PC-9 (cell line): ENCODE measurements at regions of chr9 and their contacts with region 1.

Region 1: GRCh38 chr9:109349421-109349846 is 28.6 kb upstream of the EPB41L4B start:
- DNase-seq: peak; percentile 26 to 94
- H3K4me3 ChIP-seq: no peak overlapping the region
- H3K27ac ChIP-seq: peak overlapping the region; percentile 29; the same call in 1 of the 2 replicates
- H3K4me1 ChIP-seq: peaks cover 40% of the 10 kb centered on the region
- H3K27me3 ChIP-seq: no peaks in the 10 kb centered on the region
- CTCF ChIP-seq: no peak

Region 2: DNA sequence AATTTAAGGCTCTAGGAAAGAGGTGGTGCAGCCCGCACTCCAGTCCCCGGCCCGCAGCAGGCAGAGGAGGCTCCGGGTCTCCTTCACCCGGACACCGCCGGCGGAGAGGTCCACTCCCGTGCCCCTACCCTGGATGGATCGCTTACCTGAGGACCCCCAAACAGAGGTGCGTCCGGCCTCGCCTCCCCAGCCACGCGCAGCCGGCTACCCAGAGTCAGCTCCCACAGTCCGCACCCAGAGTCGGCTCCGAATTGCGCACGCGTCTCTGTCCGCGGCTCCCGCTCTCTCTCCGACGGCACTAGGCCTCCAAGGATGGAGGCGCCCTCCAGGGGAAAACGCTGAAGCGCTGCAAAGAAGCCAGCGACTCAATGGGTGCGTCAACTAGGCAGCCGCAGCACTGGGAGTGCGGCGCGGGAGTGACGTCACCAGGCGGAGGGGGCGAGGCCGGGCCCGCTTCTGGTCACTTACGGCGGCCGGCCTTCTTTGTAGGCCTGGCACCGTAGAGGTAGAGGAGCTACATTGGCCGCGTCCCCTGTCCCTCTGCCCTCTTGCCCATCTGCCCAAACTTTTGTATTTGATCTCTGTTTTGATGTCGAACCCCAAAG is 415.6 kb before region 1 on chr9 and contains the start of gene ELP1:
- CTCF ChIA-PET with region 1: no interaction called
- POLR2A ChIA-PET with region 1: no interaction called
- intact Hi-C with region 1: loop called (anchors 10 kb)
- DNase-seq: peak; percentile 91 to 93
- H3K4me3 ChIP-seq: peak within 1 kb of the TSS; percentile 99
- H3K27ac ChIP-seq: peak within 1 kb of the TSS; percentile 80
- H3K4me1 ChIP-seq: peaks cover 20% of the 10 kb centered on the region
- H3K27me3 ChIP-seq: no peaks in the 10 kb centered on the region
- CTCF ChIP-seq: no peak
- total RNA-seq, gene ELP1: 29.6 and 35.1 TPM in 2 replicates

Region 3: GRCh38 chr9:109274884-109275730 is 74.3 kb before region 1 on chr9:
- CTCF ChIA-PET with region 1: no interaction called
- POLR2A ChIA-PET with region 1: no interaction called
- intact Hi-C with region 1: no loop called
- DNase-seq: no peak
- H3K4me3 ChIP-seq: no peak overlapping the region
- H3K27ac ChIP-seq: no peak overlapping the region
- H3K4me1 ChIP-seq: no peaks in the 10 kb centered on the region
- H3K27me3 ChIP-seq: no peaks in the 10 kb centered on the region
- CTCF ChIP-seq: no peak

Region 4: DNA sequence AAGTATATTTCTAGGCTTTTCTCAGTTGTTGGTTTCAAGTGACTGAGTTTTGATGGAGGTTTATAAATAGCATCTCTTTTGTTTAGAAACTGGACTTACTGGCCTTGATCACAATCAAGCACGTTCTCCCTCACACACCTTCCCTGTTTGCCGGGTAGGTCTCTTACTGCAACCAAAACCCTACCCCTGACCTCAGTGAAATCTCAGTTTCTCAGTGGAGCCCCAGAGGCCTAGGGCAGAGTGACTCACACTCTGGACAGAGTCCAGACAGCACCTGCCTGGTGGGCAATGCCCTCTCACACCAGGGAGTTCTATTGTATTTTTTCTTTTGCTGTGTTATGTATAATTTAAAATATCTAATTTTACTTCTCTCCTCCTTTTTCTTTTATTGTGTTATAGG is 19.9 kb after region 1 on chr9:
- CTCF ChIA-PET with region 1: no interaction called
- POLR2A ChIA-PET with region 1: no interaction called
- intact Hi-C with region 1: loop called (anchors 2 kb)
- DNase-seq: peak; percentile 80 to 81
- H3K4me3 ChIP-seq: no peak overlapping the region
- H3K27ac ChIP-seq: peak overlapping the region; percentile 60
- H3K4me1 ChIP-seq: peaks cover 37% of the 10 kb centered on the region
- H3K27me3 ChIP-seq: no peaks in the 10 kb centered on the region
- CTCF ChIP-seq: no peak

Region 5: GRCh38 chr9:109401168-109401989 is 51.9 kb after region 1 on chr9:
- CTCF ChIA-PET with region 1: no interaction called
- POLR2A ChIA-PET with region 1: no interaction called
- intact Hi-C with region 1: no loop called
- DNase-seq: peak; percentile 55 to 71
- H3K4me3 ChIP-seq: no peak overlapping the region
- H3K27ac ChIP-seq: no peak overlapping the region; the same call in 1 of the 2 replicates
- H3K4me1 ChIP-seq: no peaks in the 10 kb centered on the region
- H3K27me3 ChIP-seq: no peaks in the 10 kb centered on the region
- CTCF ChIP-seq: peak; percentile 89

Region 6: DNA sequence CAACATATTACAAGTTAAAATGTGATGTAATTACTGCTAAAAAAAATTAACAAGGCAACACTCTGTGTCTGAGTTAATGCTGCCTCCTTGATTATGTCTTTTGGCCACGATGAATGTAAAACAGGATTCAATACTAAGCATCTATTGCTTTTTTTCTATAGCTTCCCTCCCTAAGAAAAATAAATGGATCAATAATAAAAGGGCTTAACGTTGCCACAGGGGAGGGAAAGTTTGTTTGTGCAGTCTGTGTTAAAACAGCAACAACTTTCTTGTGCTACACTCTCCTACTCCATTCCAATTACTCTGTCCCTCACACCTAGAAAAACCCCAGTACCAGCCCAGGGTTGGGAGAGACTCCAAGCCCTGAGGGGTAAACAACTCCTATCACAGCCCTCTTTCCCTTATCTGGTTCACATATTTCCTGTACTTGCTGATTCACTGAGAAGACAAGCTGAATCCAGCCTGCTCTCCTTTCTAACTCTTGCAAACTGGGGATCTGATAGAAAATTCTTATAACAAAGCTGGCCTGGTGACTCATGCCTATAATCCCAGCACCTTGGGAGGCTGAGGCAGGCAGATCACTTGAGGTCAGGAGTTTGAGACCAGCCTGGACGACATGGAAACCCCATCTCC is 103.9 kb after region 1 on chr9:
- CTCF ChIA-PET with region 1: no interaction called
- POLR2A ChIA-PET with region 1: no interaction called
- intact Hi-C with region 1: loop called (anchors 5 kb)
- DNase-seq: peak; percentile 85 to 97
- H3K4me3 ChIP-seq: 0 out of 2 replicates have a peak overlapping the region, but pooled peaks have one; percentile 9
- H3K27ac ChIP-seq: peak overlapping the region; percentile 97
- H3K4me1 ChIP-seq: peaks cover 38% of the 10 kb centered on the region
- H3K27me3 ChIP-seq: no peaks in the 10 kb centered on the region
- CTCF ChIP-seq: no peak

Region 7: DNA sequence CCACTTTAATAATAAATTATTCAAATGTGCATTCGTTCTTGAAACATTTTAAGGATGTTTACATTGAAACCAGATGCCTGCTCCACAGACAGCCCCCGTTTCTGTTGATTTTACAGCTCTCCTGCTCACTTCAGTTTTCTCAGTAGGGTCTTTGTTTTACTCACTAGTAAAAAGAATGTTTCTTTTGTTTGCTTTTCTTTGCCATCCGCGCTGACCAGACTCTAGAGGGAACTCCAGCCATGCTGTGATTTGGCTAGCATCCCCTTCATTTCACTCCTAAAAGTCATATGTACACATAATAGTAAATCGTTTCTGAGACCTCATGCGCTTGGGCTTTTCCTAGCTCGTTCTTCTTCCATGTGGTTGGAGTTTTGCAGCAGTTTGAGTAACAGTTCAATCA is 401.8 kb after region 1 on chr9:
- CTCF ChIA-PET with region 1: no interaction called
- POLR2A ChIA-PET with region 1: no interaction called
- intact Hi-C with region 1: no loop called
- DNase-seq: no peak
- H3K4me3 ChIP-seq: no peak overlapping the region
- H3K27ac ChIP-seq: no peak overlapping the region
- H3K4me1 ChIP-seq: no peaks in the 10 kb centered on the region
- H3K27me3 ChIP-seq: no peaks in the 10 kb centered on the region
- CTCF ChIP-seq: no peak